ENCODE measurements at regions of chr6 and their contacts with region 1.

Region 1: DNA sequence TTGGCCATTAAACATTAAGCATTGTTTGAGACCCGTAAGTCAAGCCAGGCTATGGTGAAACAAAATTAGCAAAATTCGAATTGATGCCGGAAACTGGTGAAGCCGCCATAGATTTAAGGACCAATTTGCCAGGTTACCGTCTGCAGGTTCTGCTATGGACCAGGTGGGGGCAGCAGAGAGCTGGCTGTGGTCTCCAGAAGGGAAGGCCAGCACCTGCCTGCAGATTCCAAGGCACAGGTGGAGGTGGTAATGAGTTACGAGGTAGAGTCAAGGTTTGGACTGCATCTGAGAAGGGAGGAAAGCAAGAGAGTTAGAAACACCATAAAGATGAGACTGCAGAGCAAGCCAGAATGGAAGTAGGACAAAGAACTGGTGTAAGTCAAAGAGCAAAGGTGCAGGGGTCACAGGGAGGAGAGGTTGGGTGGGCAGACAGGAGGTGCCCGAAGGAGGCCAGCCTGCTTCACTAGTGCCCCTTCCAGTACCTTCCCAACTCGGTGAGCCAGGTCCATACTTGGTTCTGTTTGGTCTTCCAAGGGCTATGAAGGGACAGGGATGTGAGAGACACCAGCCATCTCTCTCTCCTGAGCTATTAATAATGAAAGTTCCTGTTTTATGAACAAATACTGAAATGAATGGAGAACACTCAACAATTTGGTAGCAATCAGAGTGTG is 131.6 kb upstream of the ESR1 start:
- DNase-seq: peak; percentile 64
- H3K4me3 ChIP-seq: no peak overlapping the region
- H3K27ac ChIP-seq: no peak overlapping the region
- H3K4me1 ChIP-seq: peaks cover 4% of the 10 kb centered on the region
- CTCF ChIP-seq: peak; percentile 96

Region 2: DNA sequence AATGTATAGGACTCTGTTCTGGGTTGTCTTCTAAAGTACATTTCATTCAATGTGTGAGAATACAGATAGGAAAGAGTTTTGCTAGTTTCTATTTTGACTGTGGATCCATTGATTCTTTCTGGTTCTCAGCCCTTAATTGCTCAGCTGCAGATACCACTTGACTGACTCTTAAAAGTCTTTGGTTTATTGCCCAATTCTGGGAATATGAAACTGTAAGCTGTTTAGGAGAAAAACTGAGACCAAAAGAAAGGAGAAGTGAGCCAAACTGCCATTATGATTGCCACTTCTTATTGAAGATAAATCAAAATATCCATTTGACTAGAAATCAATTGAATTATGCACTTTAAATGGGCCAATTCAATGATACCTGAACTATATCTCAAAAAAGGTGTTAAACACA is 343.0 kb after region 1 on chr6:
- CTCF ChIA-PET with region 1: no interaction called
- POLR2A ChIA-PET with region 1: no interaction called
- intact Hi-C with region 1: no loop called
- DNase-seq: no peak
- H3K4me3 ChIP-seq: no peak overlapping the region
- H3K27ac ChIP-seq: no peak overlapping the region
- H3K4me1 ChIP-seq: no peaks in the 10 kb centered on the region
- CTCF ChIP-seq: no peak

Region 3: DNA sequence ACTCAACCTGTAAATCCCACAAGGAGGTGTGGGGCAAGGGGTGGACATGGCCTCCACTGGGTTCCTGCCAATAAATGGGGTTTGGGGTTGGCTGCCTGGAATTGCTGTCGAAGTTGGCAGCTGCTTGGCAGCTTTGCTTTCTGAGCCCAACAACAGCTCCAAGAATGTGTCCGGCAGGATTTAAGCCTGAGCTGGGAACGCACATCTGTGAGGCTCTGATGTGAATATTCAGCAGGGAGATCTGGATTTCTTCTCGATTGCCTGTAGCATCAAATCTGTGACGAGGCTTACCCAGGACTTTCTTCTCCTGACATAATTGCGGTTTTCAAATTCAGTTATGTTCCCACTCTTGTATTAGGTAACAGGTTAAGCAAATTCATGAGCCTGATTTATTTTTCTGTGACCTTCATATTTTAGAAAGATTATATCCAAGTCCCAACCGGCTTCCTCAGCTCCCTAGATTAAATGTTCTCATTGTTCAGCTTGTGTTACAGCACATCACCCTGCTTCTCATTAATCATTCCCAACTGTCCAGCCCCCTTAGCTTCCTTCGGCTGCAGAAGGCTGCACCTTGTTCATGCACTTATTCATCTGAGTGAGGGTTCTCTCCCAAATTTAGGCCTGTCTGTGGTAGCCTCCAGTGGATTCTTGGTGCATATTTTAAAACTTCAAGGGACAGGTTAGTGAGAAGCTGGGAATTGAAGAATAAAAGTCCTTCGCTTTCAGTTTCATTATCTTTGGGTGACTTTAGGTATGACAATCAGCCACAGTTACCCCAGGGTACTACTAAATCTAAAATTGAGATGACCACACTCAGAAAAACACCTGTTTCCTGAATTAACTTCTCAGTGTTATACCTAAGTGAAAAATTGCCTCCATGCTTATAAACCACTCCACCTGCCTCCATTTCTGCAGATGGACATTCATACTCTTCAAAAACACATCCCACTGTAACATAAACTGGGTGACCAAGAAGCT is 441.6 kb after region 1 on chr6:
- CTCF ChIA-PET with region 1: no interaction called
- POLR2A ChIA-PET with region 1: no interaction called
- intact Hi-C with region 1: loop called (anchors 10 kb)
- DNase-seq: no peak
- H3K4me3 ChIP-seq: no peak overlapping the region
- H3K27ac ChIP-seq: no peak overlapping the region
- H3K4me1 ChIP-seq: no peaks in the 10 kb centered on the region
- CTCF ChIP-seq: no peak

Region 4: DNA sequence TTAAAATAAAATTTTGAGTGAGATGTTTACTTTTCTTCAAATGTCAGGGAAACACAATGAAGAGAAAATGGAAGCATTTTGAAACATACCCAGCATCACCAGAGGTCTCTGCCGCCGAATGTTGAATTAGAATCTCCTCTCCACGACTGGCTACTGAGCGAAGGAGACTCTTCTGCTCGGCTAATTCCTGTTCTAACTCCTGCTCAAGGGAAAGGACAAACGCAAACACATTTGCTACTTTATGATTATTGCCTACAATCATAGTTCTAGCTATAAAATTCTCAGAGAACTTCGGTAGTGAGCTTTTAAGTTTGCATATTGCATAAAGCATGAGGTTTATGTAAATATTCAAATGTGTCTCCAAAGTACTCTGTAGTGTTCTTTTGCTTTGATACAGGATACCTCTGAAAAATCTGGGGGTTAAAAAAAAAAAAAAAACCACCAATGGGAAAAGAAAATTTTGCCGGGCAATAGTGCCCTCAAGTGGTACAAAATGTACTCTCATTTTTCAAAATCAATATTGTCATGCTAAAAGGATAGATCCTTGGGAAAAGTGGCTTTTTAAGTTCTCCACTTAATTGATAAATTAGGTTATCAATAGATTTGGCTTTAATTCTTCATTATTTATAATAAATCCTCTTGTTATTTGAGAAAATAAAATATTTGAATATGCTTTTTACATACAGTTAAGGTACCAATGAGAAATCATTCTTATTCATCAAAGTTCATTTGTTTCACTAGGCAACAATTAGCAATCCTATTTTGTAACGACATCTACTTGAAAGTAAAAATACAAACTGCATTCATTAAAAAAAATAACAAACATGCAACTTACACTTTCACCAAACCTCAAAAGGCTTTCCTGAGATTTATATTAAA is 592.3 kb after region 1 on chr6:
- CTCF ChIA-PET with region 1: no interaction called
- POLR2A ChIA-PET with region 1: no interaction called
- intact Hi-C with region 1: loop called (anchors 5 kb)
- DNase-seq: peak; percentile 46
- H3K4me3 ChIP-seq: no peak overlapping the region
- H3K27ac ChIP-seq: no peak overlapping the region
- H3K4me1 ChIP-seq: no peaks in the 10 kb centered on the region
- CTCF ChIP-seq: peak; percentile 89

Region 5: DNA sequence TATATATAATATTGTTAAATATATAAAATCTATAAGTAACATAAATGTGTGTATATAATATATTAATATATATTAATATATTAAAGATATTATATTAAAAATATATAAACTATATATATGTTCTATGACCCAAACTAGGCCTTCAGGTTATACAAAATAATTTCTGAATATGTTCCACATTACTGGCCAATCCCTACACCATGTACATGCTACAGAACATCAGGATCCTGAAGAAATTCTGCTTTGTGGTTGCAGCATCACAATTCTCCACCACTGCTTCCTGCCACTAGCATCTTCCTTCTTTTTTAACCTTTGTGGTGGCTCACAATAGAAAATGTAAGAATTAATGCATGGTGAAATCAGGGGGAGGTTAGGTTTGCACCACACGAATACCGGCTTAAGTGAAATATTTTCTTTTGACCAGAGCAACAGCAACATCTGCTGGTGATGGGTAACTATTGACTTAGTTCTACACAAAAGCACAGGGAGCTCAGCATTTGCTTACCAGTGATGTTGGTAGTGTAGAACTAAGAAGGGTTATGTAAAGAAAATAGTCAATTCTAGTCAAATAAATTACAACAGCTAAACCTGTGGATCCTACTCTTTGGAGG is 680.7 kb after region 1 on chr6:
- CTCF ChIA-PET with region 1: no interaction called
- POLR2A ChIA-PET with region 1: no interaction called
- intact Hi-C with region 1: loop called (anchors 10 kb)
- DNase-seq: peak; percentile 48
- H3K4me3 ChIP-seq: no peak overlapping the region
- H3K27ac ChIP-seq: no peak overlapping the region
- H3K4me1 ChIP-seq: no peaks in the 10 kb centered on the region
- CTCF ChIP-seq: peak; percentile 73